Mammary epithelial cell (primary cell): ENCODE measurements at regions of chr1 and their contacts with region 1.

Region 1: DNA sequence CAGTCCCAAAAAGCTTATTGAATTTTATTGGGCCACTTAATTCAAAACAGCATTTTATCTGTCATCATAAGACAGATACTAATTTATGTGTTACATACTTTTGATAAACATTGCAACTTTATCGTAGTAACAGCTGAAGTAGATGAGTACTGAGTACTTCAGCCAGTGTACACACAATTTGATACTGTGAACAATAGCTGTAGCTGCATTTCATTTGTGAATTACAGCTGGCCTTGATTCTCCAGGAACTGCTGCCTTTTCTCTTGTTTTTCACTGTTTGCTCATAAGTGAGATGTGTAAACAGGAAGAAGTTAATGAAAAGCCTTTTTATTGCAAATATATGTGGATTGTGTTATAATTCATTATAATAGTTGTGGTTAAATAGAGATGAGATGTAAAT is 10.2 kb downstream of the UAP1 start:
- DNase-seq: no peak
- H3K4me3 ChIP-seq: no peak overlapping the region
- H3K27ac ChIP-seq: no peak overlapping the region
- H3K4me1 ChIP-seq: no peaks in the 10 kb centered on the region
- H3K27me3 ChIP-seq: no peaks in the 10 kb centered on the region
- CTCF ChIP-seq: no peak

Region 2: GRCh38 chr1:162527324-162527723 is 44.4 kb before region 1 on chr1:
- CTCF ChIA-PET with region 1: no interaction called
- dilution Hi-C with region 1: no loop called
- in situ Hi-C with region 1: loop called in 1 of 2 experiments (anchors 10 kb)
- intact Hi-C with region 1: no loop called
- DNase-seq: no peak
- H3K4me3 ChIP-seq: no peak overlapping the region
- H3K27ac ChIP-seq: no peak overlapping the region
- H3K4me1 ChIP-seq: no peaks in the 10 kb centered on the region
- H3K27me3 ChIP-seq: no peaks in the 10 kb centered on the region
- CTCF ChIP-seq: no peak